Psoas muscle (tissue), 8 donors: ENCODE measurements at regions of chr1 and their contacts with region 1.

Region 1: DNA sequence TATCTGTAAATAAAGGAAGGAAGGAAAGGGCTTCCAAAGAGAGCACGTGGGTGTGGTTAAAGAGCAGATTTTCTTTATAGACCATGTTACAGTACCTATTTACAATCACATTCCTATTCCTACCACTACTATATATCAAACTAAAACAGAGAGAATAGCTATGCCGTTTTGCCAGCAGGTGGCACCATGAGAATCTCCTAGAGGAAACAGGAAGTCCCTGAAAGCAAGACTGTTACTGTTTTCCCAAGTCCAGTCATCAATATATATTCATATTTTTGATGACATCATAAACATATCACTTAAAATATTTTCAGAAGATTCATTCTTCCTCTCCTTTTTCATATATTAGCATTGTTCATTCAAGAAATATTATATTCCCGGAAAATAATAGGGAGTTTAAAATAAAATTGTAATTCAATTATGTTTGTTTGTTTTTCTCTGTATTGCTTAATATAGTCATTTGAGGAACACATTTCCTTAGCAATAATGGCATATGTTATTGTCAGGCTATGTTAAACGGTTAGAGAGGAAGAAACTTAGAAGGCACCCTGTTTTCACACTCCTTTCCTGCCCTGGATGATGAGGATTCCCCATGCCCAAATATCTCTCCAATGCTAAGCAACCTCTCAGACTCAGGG is 6.6 kb downstream of the CCDC190 start:
- DNase-seq: peak; percentile 24 to 56
- ATAC-seq: peak in 3 of 4 donors; percentile 46 to 77 (median 68)
- H3K4me3 ChIP-seq: no peak overlapping the region
- H3K27ac ChIP-seq: no peak overlapping the region
- H3K4me1 ChIP-seq: no peaks in the 10 kb centered on the region
- H3K27me3 ChIP-seq: no peaks in the 10 kb centered on the region
- CTCF ChIP-seq: peak; percentile 75

Region 2: DNA sequence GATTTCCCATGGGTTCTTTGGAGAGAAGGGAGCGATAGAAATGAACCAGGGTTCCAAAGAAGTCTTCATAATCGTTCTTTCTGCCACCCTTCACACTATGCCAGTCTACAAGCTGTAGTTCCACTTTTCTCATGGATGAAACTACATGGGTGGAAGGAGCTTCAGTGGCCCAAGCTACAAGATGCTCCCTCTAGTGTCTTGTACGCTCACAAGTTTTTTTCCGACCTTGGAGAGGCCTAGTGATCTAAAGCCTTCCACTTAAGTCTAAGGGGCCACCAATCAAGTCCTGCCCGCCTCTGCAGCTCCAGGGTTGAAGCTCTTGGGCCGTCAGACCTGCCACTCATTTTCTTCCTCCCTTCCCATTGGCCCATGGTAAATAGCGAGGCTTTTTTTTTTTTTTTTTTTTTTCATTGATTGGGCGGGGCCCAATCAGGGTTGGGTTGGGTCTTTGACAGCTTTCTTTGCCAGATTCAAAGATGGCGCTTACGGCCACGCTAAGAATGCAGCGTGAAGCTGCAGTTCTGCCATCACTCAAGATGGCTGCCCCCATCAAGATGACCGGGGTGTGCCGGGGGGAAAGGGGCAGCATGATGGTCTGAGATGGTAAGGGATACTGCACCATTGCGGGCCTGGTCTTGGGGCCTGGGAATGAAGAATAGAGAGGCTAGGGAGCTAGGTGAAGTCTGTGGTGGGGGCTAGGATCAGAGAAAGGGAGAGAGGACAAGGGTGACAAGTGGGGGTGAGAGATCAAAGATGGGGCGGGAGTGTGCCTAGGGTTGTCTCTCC is 1628.6 kb before region 1 on chr1 and contains the start of gene TOMM40L:
- intact Hi-C with region 1: no loop called
- DNase-seq: peak; percentile 89 to 95
- ATAC-seq: peak; percentile 95 to 98 (median 96)
- H3K4me3 ChIP-seq: peak within 1 kb of the TSS; percentile 85
- H3K27ac ChIP-seq: peak within 1 kb of the TSS; percentile 77
- H3K4me1 ChIP-seq: peaks cover 12% of the 10 kb centered on the region
- H3K27me3 ChIP-seq: no peaks in the 10 kb centered on the region
- CTCF ChIP-seq: peak; percentile 58
- total RNA-seq, gene TOMM40L: 10.0 to 39.2 (median 27.5) TPM

Region 3: GRCh38 chr1:163307479-163308171 is 453.3 kb after region 1 on chr1:
- intact Hi-C with region 1: loop called (anchors 5 kb)
- DNase-seq: no peak
- ATAC-seq: no peak
- H3K4me3 ChIP-seq: no peak overlapping the region
- H3K27ac ChIP-seq: no peak overlapping the region
- H3K4me1 ChIP-seq: no peaks in the 10 kb centered on the region
- H3K27me3 ChIP-seq: no peaks in the 10 kb centered on the region
- CTCF ChIP-seq: no peak